Heart right ventricle (tissue), 16 donors: ENCODE measurements at regions of chr22 and their contacts with region 1.

Region 1: GRCh38 chr22:19523240-19524169 is 705 bp downstream of the CLDN5 start:
- DNase-seq: no peak
- ATAC-seq: peak in 5 of 8 donors; percentile 0 to 18 (median 9)
- H3K4me3 ChIP-seq: peak overlapping the region; percentile 51 to 75 (median 60)
- H3K27ac ChIP-seq: peak overlapping the region; percentile 71 to 97 (median 89)
- H3K4me1 ChIP-seq: peaks cover 19 to 78% (median 36%) of the 10 kb centered on the region in 9 donors
- H3K27me3 ChIP-seq: peaks cover 13 to 43% (median 30%) of the 10 kb centered on the region in 7 donors
- CTCF ChIP-seq: no peak

Region 2: GRCh38 chr22:19375435-19375834 is 148.1 kb before region 1 on chr22:
- intact Hi-C with region 1: no loop called
- DNase-seq: no peak
- ATAC-seq: no peak
- H3K4me3 ChIP-seq: no peak overlapping the region
- H3K27ac ChIP-seq: no peak overlapping the region
- H3K4me1 ChIP-seq: no peaks in the 10 kb centered on the region
- H3K27me3 ChIP-seq: no peaks in the 10 kb centered on the region
- CTCF ChIP-seq: no peak

Region 3: DNA sequence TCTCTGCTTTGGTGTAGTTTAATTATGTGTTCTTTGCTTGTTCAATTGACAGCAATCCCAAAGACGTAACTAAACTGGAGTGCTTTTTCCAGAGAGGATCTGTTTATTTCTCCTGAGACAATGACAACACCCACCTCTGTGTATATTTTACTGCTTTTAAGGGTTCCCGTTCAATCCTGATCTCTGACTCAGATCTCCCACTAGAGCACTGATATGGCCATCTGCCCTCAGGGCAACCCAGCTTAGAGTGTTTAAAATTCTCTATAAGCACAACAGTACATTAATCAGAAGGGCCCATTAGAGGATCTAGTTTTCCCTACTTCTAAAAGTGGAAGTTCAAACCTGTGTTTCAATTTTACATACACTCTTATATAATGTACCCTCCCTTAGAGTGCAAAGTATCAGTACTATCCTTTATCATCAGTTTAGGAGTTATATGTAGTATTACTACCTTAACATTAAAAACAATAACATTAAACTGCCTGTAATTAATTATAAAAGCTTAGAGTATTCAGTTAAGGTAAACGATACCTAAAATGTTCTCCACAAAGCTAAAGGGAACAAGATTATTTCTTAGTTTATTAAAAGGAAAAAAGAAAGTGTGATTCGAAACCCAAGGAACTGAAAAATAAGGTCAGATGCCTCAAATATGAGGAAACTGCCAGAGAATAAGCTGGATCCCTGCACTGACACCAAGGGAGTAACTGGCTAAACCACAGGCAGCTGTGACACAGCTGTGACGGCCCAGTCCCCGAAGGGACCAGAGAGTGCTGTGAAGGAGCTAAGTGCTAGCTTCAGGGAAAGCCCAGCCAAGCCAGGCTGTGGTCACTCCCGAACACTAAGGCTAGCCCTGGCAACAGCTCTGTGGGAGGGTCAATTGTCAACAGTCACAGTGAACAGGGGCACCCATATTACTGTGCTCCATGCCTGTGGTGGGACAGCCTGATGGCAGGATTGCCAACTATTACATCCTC is 59.7 kb before region 1 on chr22:
- intact Hi-C with region 1: no loop called
- DNase-seq: peak; percentile 32 to 56
- ATAC-seq: peak; percentile 56 to 85 (median 66)
- H3K4me3 ChIP-seq: no peak overlapping the region
- H3K27ac ChIP-seq: peak overlapping the region in 1 of 10 donors; percentile 41
- H3K4me1 ChIP-seq: no peaks in the 10 kb centered on the region
- H3K27me3 ChIP-seq: no peaks in the 10 kb centered on the region
- CTCF ChIP-seq: no peak

Region 4: DNA sequence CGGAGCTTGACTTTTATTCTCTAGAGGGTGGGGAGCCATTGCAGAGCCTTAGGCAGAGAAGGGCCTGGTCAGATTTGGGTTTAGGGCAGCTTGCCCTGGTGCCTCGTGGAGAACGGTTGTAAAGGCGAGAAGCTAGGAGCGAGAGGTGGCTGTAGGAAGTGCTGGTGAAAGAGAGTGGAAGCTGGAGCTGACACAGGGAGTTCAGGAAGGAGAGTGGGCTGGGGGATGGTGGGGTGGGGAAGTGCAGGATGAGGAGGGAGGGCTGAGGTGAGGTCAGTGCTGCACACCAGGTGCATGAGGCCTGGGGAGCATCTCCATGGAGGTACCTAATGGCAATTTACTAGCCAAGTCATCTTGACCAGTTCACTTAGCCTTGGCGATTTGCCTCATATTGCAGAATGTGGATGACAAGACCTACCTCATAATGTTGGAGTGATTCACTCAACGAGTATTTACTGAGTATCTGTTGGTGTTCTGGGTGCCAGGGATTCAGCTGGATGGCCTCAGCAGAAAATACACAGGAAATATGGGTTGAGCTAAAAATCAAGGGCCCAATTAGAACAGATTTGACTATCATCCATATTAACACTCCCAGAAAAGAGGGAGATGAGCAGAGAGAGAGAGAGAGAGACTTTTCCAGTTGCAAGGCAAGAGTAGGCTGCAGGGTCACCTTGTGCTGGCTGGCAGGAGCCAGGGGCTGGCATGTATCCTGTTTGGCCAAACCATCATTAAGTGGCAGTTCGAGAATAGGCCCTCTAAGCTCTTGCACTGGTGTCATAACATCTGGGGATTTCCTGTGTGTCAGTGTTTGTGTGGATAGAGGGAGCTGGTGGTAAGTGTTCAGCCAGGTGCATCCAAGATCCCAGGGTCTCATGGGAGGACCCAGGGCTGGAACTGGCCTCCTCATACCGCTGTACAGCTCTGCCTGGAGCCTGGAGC is 45.1 kb after region 1 on chr22:
- intact Hi-C with region 1: loop called in 6 of 10 experiments (anchors 1 to 10 kb)
- DNase-seq: peak; percentile 19 to 37
- ATAC-seq: peak in 4 of 8 donors; percentile 24 to 43 (median 38)
- H3K4me3 ChIP-seq: no peak overlapping the region
- H3K27ac ChIP-seq: peak overlapping the region in 8 of 10 donors; percentile 26 to 89 (median 78)
- H3K4me1 ChIP-seq: peaks cover 7 to 59% (median 35%) of the 10 kb centered on the region in 9 donors
- H3K27me3 ChIP-seq: no peaks in the 10 kb centered on the region
- CTCF ChIP-seq: no peak

Region 5: GRCh38 chr22:19576460-19577421 is 53.2 kb after region 1 on chr22:
- intact Hi-C with region 1: loop called in 4 of 10 experiments (anchors 5 to 10 kb)
- DNase-seq: peak; percentile 36 to 48
- ATAC-seq: peak; percentile 31 to 85 (median 78)
- H3K4me3 ChIP-seq: no peak overlapping the region
- H3K27ac ChIP-seq: peak overlapping the region in 9 of 10 donors; percentile 51 to 81 (median 69)
- H3K4me1 ChIP-seq: peaks cover 6 to 53% (median 40%) of the 10 kb centered on the region in 9 donors
- H3K27me3 ChIP-seq: peaks cover 0 to 20% (median 0%) of the 10 kb centered on the region in 7 donors
- CTCF ChIP-seq: no peak

Region 6: GRCh38 chr22:19619144-19620009 is 95.9 kb after region 1 on chr22:
- intact Hi-C with region 1: loop called in 4 of 10 experiments (anchors 1 to 10 kb)
- DNase-seq: no peak
- ATAC-seq: no peak
- H3K4me3 ChIP-seq: no peak overlapping the region
- H3K27ac ChIP-seq: no peak overlapping the region
- H3K4me1 ChIP-seq: peaks cover 4 to 24% (median 12%) of the 10 kb centered on the region in 9 donors
- H3K27me3 ChIP-seq: peaks cover 0 to 19% (median 8%) of the 10 kb centered on the region in 7 donors
- CTCF ChIP-seq: no peak